ENCODE measurements at regions of chr7 and their contacts with region 1.

Region 1: GRCh38 chr7:158829342-158830210 is at the start of gene ESYT2:
- DNase-seq: peak; percentile 98
- H3K4me3 Mint-ChIP-seq: peak within 1 kb of the TSS; percentile 99
- H3K27ac Mint-ChIP-seq: peak within 1 kb of the TSS; percentile 79
- H3K4me1 Mint-ChIP-seq: peaks cover 29% of the 10 kb centered on the region
- H3K27me3 Mint-ChIP-seq: peaks cover 6% of the 10 kb centered on the region
- total RNA-seq, gene ESYT2: 62.4 and 64.2 TPM in 2 replicates

Region 2: DNA sequence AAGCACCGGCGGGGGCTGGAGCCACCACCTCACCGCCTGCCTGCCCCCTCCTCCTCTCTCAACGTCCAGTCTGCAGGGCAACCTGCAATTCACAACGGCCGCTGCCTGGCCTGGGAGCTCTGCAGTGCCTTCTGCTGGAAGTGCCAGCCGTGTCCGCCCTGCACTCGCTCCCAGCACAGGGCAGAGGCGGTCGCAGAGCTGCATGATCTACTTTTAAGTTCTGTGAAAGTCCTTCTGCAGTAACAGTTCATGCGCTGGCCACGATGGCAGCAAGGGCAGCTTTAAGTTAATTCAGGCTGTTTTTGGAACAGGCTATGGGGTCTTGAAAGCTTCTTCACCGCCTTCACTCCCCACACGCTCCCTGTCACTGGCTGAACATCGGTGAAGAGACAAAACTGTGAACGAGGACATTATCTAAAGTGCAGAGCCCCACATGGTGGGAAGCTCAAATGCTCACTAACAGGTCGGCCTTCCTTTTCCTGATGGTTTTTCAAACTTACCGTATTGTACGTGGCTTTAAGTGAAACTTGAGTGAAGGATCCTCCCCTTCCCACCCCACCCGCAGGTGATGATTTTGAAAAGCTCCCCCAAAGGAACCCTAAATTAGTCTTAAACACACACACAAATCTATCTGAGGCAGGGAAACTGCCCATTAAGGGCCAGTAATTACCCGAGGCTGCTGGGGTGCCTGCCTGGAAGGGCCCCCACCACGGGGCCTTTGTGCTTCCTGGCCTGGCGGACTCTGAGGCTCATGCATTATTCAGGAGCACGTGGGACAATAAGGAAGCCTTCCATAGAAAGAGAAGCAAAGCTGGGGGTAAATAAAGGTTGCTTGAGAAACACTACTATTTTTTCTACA is 988.4 kb before region 1 on chr7:
- intact Hi-C with region 1: no loop called
- DNase-seq: no peak
- H3K4me3 Mint-ChIP-seq: no peak overlapping the region
- H3K27ac Mint-ChIP-seq: no peak overlapping the region
- H3K4me1 Mint-ChIP-seq: no peaks in the 10 kb centered on the region
- H3K27me3 Mint-ChIP-seq: no peaks in the 10 kb centered on the region

Region 3: GRCh38 chr7:158704704-158705468 is 124.7 kb before region 1 on chr7 and contains the start of gene NCAPG2:
- intact Hi-C with region 1: loop called (anchors 2 kb)
- DNase-seq: peak; percentile 94
- H3K4me3 Mint-ChIP-seq: peak within 1 kb of the TSS; percentile 82
- H3K27ac Mint-ChIP-seq: peak within 1 kb of the TSS; percentile 87
- H3K4me1 Mint-ChIP-seq: peaks cover 43% of the 10 kb centered on the region
- H3K27me3 Mint-ChIP-seq: no peaks in the 10 kb centered on the region
- total RNA-seq, gene NCAPG2: 94.7 and 101 TPM in 2 replicates

Region 4: GRCh38 chr7:158818325-158819213 is 11.0 kb before region 1 on chr7:
- intact Hi-C with region 1: loop called (anchors 1 kb)
- DNase-seq: peak; percentile 79
- H3K4me3 Mint-ChIP-seq: peak overlapping the region; percentile 70
- H3K27ac Mint-ChIP-seq: peak overlapping the region; percentile 95
- H3K4me1 Mint-ChIP-seq: peaks cover 83% of the 10 kb centered on the region
- H3K27me3 Mint-ChIP-seq: no peaks in the 10 kb centered on the region

Region 5: DNA sequence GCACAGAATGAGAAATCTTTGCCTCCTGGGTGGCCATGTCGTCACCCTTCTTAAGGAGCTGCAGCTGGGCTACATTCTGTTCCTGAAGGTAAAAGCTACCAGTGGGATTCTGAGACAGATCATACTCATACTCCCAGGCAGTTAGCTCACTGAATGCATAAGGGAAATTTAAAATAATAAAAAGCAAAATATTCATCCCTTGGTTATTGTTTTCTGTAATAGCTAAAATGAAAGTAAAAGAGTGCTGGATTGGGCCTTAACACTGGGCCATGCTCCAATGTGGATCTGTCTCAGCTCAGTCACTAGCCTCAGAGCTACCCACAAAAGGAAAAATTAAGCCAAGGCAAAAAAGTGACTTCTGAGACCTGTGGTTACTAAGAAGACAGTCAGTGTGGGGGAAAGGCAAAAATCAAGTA is 17.9 kb after region 1 on chr7:
- intact Hi-C with region 1: loop called (anchors 2 kb)
- DNase-seq: no peak
- H3K4me3 Mint-ChIP-seq: peak overlapping the region; percentile 45
- H3K27ac Mint-ChIP-seq: peak overlapping the region; percentile 91
- H3K4me1 Mint-ChIP-seq: peaks cover 20% of the 10 kb centered on the region
- H3K27me3 Mint-ChIP-seq: no peaks in the 10 kb centered on the region

Region 6: GRCh38 chr7:158856883-158857668 is 27.5 kb after region 1 on chr7:
- intact Hi-C with region 1: loop called (anchors 1 kb)
- DNase-seq: no peak
- H3K4me3 Mint-ChIP-seq: peak overlapping the region; percentile 99
- H3K27ac Mint-ChIP-seq: no peak overlapping the region
- H3K4me1 Mint-ChIP-seq: peaks cover 23% of the 10 kb centered on the region
- H3K27me3 Mint-ChIP-seq: no peaks in the 10 kb centered on the region

Region 7: DNA sequence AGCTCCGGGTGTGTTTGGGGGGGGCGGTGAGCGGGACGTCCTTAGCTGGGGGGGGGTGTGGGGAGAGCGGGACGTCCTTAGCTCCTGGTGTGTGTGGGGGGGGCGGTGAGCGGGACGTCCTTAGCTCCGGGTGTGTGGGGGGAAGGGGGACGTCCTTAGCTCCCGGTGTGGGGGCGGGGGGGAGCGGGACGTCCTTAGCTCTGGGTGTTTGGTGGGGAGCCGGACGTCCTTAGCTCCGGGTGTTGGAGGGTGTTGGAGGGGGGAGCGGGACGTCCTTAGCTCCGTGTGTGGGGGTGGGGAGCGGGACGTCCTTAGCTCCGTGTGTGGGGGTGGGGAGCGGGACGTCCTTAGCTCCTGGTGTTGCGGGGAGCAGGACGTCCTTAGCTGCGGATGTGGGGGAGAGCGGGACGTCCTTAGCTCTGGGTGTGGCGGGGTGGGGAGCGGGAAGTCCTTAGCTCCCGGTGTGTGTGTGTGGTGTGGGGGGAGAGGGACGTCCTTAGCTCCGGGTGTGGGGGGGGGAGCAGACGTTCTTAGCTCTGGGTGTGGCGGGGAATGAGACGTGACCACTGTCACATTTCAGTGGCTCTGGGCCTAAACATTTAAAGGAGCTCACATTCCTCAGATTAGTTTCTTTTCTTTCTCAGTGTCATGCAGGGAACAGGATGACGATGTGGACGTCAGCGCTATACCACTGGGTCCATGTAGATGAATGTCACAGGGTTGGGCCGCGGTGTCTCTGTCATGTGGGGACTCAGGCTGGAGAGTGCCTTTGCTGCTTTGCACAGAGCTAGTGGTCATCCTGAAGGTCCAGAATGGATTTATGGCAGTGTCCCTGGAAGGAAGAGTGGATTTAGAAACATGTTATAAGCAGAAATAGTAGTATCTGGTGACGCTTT is 34.3 kb after region 1 on chr7:
- intact Hi-C with region 1: loop called (anchors 1 kb)
- DNase-seq: peak; percentile 33
- H3K4me3 Mint-ChIP-seq: peak overlapping the region; percentile 85
- H3K27ac Mint-ChIP-seq: peak overlapping the region; percentile 90
- H3K4me1 Mint-ChIP-seq: peaks cover 41% of the 10 kb centered on the region
- H3K27me3 Mint-ChIP-seq: no peaks in the 10 kb centered on the region

Region 8: GRCh38 chr7:158880973-158881372 is 51.4 kb after region 1 on chr7:
- intact Hi-C with region 1: no loop called
- DNase-seq: no peak
- H3K4me3 Mint-ChIP-seq: no peak overlapping the region
- H3K27ac Mint-ChIP-seq: no peak overlapping the region
- H3K4me1 Mint-ChIP-seq: no peaks in the 10 kb centered on the region
- H3K27me3 Mint-ChIP-seq: no peaks in the 10 kb centered on the region

Measured in activated T-helper 2 cell treated with anti-CD3 and anti-CD28 coated beads, Interferon-gamma antibody, Interleukin-2, Interleukin-4, amounts not matched to agents 10 μg/mL and 5 μg/mL and 100 μg/mL, durations not matched to agents 14 hours and 24 hours and 36 hours (primary cell).